T-cell (primary cell): ENCODE measurements at regions of chr7 and their contacts with region 1.

Region 1: DNA sequence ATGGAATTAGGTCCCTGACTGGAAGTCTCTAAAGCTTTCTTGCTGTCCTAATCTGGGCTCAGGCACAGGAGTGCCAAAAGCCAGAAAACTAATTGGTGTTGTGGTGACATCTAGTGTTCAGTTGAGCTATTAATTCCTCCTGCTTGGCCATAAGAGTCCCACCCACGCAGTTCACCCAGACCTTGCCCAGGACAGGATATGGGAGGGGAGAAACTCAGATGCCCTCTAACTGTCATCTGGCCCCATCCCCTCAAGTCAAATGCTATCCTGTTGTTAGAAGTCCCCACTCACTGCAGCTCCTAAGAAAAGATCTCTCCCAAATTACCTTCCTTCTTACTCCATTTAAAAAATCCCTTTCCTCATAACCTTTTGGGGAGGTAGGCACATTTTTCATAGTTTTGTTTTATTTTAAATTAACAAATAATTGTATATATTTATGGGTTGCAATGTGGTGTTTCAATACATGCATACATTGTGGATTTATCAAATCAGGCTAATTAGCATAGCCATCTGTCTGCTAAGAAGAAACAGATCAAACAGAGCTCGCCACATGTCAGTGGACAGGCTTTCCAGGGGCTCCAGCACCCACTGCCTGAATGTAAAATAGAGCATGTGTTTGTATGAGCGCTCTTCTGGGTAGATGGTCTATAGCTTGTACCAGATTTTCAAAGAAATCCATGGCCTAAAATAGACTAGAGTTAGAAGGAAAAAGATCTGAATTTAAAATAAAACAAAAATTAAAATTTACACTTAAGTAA is 84.0 kb downstream of the GSAP start:
- DNase-seq: peak in 23 of 35 experiments; percentile 4 to 79 (median 14)
- ATAC-seq: peak; percentile 75 to 84 (median 78)
- H3K4me3 ChIP-seq: no peak overlapping the region
- H3K4me3 Mint-ChIP-seq: no peak overlapping the region
- H3K27ac ChIP-seq: no peak overlapping the region
- H3K27ac Mint-ChIP-seq: peak overlapping the region in 1 of 2 donors; percentile 9
- H3K4me1 ChIP-seq: peaks cover 29% of the 10 kb centered on the region in 2 experiments
- H3K4me1 Mint-ChIP-seq: peaks cover 41 to 52% (median 41%) of the 10 kb centered on the region in 3 donors
- H3K27me3 ChIP-seq: no peaks in the 10 kb centered on the region
- H3K27me3 Mint-ChIP-seq: no peaks in the 10 kb centered on the region

Region 2: GRCh38 chr7:77247206-77247850 is 84.8 kb before region 1 on chr7:
- CTCF ChIA-PET with region 1: interaction called in 1 of 2 experiments, 11 read pairs
- POLR2A ChIA-PET with region 1: interaction called in 1 of 2 experiments, 3 read pairs
- DNase-seq: peak; percentile 61 to 93 (median 82)
- ATAC-seq: peak; percentile 90 to 97 (median 93)
- H3K4me3 ChIP-seq: no peak overlapping the region
- H3K4me3 Mint-ChIP-seq: no peak overlapping the region
- H3K27ac ChIP-seq: no peak overlapping the region
- H3K27ac Mint-ChIP-seq: no peak overlapping the region
- H3K4me1 ChIP-seq: peaks cover 0 to 2% of the 10 kb centered on the region in 2 experiments
- H3K4me1 Mint-ChIP-seq: peaks cover 0 to 2% (median 0%) of the 10 kb centered on the region in 3 donors
- H3K27me3 ChIP-seq: no peaks in the 10 kb centered on the region
- H3K27me3 Mint-ChIP-seq: no peaks in the 10 kb centered on the region

Region 3: DNA sequence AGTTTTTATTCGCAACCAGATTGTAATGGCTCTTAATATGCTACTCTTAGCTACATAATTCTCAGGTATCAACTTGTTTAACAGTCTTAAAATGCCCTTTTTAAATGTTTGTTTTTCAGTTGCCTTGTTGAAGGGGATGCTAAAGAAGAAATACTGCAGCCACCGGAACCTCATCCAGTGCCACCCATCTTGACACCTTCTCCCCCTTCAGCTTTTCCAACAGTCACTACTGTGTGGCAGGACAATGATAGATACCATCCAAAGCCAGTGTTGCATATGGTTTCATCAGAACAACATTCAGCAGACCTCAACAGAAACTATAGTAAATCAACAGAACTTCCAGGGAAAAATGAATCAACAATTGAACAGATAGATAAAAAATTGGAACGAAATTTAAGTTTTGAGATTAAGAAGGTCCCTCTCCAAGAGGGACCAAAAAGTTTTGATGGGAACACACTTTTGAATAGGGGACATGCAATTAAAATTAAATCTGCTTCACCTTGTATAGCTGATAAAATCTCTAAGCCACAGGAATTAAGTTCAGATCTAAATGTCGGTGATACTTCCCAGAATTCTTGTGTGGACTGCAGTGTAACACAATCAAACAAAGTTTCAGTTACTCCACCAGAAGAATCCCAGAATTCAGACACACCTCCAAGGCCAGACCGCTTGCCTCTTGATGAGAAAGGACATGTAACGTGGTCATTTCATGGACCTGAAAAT is 294.6 kb after region 1 on chr7:
- CTCF ChIA-PET with region 1: interaction called in 1 of 2 experiments, 10 read pairs
- POLR2A ChIA-PET with region 1: no interaction called
- DNase-seq: no peak
- ATAC-seq: no peak
- H3K4me3 ChIP-seq: no peak overlapping the region
- H3K4me3 Mint-ChIP-seq: no peak overlapping the region
- H3K27ac ChIP-seq: no peak overlapping the region
- H3K27ac Mint-ChIP-seq: no peak overlapping the region
- H3K4me1 ChIP-seq: no peaks in the 10 kb centered on the region
- H3K4me1 Mint-ChIP-seq: no peaks in the 10 kb centered on the region
- H3K27me3 ChIP-seq: no peaks in the 10 kb centered on the region
- H3K27me3 Mint-ChIP-seq: no peaks in the 10 kb centered on the region